ENCODE measurements at regions of chr2 and their contacts with region 1.

Region 1: DNA sequence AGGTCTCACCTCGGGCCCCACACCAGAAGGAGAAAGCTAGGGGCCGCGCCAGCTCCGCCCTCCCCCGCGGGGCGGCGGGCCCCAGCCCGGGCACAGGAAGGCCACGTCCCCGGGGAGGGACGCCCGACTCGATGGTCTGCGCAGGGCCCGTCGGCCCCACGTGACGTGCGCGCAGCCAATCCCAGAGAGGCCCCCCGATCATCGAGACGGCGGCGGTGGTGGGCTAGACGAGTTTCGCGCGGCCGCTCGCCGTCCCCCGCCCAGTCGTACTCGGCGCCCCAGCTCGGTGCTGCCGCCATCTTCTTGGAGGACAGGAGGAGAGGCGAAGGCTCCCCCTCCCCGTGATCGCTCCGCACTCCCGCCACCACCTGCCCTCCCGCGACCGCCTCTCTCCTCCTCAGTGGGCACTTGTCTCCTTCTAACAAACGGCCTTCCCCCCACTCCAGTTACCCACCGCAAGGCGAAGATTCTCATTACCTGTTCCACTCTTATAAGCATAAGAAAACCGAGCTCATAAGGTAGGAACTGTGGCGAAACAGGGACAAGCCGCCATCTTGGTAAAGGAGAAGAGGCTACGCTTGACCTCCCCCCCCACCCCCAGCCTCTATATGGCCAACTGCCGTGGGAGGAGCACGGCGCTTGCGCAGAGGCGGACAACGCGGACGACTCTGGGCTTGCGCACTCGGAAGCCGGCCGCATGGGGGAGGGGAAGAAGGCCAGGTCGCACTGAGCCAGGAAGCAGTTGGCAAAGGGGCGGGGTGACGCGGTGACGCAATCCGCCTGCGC is at the start of gene HDLBP:
- DNase-seq: peak; percentile 100
- H3K4me3 ChIP-seq: peak within 1 kb of the TSS; percentile 87
- H3K4me3 Mint-ChIP-seq: peak within 1 kb of the TSS; percentile 94 to 100 (median 98)
- H3K27ac ChIP-seq: peak within 1 kb of the TSS; percentile 96
- H3K27ac Mint-ChIP-seq: peak within 1 kb of the TSS; percentile 98 to 100 (median 99)
- H3K4me1 ChIP-seq: peaks cover 82% of the 10 kb centered on the region
- H3K4me1 Mint-ChIP-seq: peaks cover 54 to 92% (median 70%) of the 10 kb centered on the region in 4 donors
- H3K27me3 ChIP-seq: no peaks in the 10 kb centered on the region
- H3K27me3 Mint-ChIP-seq: peaks cover 0 to 1% of the 10 kb centered on the region in 2 donors
- total RNA-seq, gene HDLBP: 166 to 183 TPM

Region 2: DNA sequence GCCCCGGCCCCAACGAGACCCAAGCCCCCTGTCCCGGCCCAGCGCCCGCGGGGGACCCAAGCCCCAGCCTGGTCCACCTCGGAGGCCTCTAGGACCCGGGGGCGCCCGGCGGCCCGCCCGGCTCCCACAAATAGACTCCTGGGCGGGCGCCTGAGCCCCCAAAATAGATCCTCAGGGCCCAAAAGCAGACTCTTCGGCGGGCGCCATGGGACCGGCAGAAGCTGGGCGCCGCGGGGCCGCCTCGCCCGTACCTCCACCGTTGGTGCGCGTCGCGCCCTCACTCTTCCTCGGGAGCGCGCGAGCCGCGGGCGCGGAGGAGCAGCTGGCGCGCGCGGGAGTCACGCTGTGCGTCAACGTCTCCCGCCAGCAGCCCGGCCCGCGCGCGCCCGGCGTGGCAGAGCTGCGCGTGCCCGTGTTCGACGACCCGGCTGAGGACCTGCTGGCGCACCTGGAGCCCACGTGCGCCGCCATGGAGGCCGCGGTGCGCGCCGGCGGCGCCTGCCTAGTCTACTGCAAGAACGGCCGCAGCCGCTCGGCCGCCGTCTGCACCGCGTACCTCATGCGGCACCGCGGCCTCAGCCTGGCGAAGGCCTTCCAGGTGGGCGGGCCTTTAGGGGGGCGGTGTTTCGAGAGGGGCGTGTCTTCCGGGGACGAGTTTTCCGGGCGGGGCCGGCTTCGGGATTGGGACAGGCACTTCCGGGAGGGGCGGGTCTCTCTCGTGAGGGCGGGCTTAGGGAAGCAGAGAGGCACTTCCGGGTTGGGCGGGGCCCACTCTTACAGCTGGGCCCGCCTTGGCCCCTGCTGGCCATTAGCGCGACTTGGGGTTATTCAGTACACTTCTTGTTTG is 754.6 kb before region 1 on chr2:
- CTCF ChIA-PET with region 1: no interaction called
- POLR2A ChIA-PET with region 1: interaction called, 15 read pairs
- intact Hi-C with region 1: loop called (anchors 10 kb)
- DNase-seq: peak; percentile 99 to 100 (median 99)
- H3K4me3 ChIP-seq: peak overlapping the region; percentile 54 to 90
- H3K4me3 Mint-ChIP-seq: peak overlapping the region; percentile 84 to 91 (median 88)
- H3K27ac ChIP-seq: peak overlapping the region; percentile 86
- H3K27ac Mint-ChIP-seq: peak overlapping the region; percentile 86 to 99 (median 94)
- H3K4me1 ChIP-seq: peaks cover 85% of the 10 kb centered on the region
- H3K4me1 Mint-ChIP-seq: peaks cover 47 to 84% (median 67%) of the 10 kb centered on the region in 4 donors
- H3K27me3 ChIP-seq: no peaks in the 10 kb centered on the region
- H3K27me3 Mint-ChIP-seq: no peaks in the 10 kb centered on the region

Region 3: DNA sequence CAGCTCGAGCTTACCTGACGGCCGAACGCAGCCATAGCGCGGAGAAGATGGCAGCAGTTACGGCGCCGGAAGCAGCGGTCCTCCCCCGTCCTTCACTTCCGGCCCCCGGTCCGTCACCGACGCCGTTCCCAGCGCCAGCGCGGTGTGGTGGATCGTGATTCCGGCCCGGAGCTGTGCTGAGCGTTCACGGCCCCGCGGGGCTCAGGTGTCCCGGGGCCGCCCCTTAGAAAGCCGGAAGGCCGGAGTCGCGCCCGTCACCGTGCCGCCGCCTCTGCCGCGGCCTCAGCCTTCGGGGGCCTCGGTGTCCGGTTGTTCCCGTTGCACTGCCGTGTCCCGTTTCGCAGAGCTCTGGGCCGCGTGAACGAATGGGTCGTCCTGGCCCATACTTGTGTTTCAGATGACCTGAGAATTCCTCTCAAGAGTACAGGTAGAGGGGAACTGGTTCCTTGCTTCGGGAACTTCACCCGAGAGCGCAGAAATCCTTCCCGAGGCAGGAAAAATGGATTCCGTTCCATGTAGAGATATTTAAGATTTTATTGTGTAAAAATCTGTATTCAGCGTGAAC is 213.0 kb before region 1 on chr2 and contains the start of gene MTERF4:
- CTCF ChIA-PET with region 1: interaction called, 5 read pairs
- POLR2A ChIA-PET with region 1: interaction called, 16 read pairs
- intact Hi-C with region 1: loop called (anchors 2 kb)
- DNase-seq: peak; percentile 85 to 88 (median 86)
- H3K4me3 ChIP-seq: peak within 1 kb of the TSS; percentile 92 to 94
- H3K4me3 Mint-ChIP-seq: peak within 1 kb of the TSS; percentile 94 to 98 (median 96)
- H3K27ac ChIP-seq: peak within 1 kb of the TSS; percentile 92
- H3K27ac Mint-ChIP-seq: peak within 1 kb of the TSS; percentile 97 to 99 (median 98)
- H3K4me1 ChIP-seq: peaks cover 88% of the 10 kb centered on the region
- H3K4me1 Mint-ChIP-seq: peaks cover 32 to 88% (median 62%) of the 10 kb centered on the region in 4 donors
- H3K27me3 ChIP-seq: no peaks in the 10 kb centered on the region
- H3K27me3 Mint-ChIP-seq: no peaks in the 10 kb centered on the region
- total RNA-seq, gene MTERF4: 204 to 227 TPM

Region 4: DNA sequence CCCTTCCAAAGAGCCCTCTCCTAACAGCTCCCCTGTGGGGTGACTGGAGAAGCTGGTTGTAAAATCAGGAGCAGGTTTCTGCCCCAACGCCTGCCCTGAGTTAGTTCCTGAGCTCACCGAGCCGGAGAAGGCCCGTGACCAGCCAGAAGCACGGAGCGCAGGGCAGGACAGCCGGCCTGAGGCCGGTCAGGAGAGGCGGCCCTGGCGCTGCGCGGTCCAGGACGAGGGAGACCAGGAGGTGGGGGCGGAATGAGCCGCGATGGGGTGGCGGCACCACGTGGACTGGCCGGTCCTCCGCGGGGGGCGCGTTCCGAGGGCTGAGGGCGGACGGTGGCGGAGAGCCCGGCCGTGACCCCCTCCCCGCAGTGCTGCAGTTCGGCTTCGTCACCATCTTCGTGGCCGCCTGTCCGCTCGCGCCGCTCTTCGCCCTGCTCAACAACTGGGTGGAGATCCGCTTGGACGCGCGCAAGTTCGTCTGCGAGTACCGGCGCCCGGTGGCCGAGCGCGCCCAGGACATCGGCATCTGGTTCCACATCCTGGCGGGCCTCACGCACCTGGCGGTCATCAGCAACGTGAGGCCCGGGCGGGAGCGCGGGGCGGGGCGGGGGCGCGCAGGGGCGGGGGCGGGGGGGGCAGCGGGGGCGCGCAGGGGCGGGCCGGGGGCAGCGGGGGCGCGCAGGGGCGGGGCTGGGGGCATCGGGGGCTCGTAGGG is 97.8 kb before region 1 on chr2:
- CTCF ChIA-PET with region 1: no interaction called
- POLR2A ChIA-PET with region 1: interaction called, 3 read pairs
- intact Hi-C with region 1: loop called (anchors 5 kb)
- DNase-seq: peak in 4 of 5 donors; percentile 25 to 40 (median 36)
- H3K4me3 ChIP-seq: peak overlapping the region in 1 of 2 donors; percentile 32
- H3K4me3 Mint-ChIP-seq: peak overlapping the region; percentile 66 to 87 (median 78)
- H3K27ac ChIP-seq: peak overlapping the region; percentile 35
- H3K27ac Mint-ChIP-seq: peak overlapping the region in 6 of 7 donors; percentile 35 to 75 (median 62)
- H3K4me1 ChIP-seq: peaks cover 10% of the 10 kb centered on the region
- H3K4me1 Mint-ChIP-seq: peaks cover 10 to 17% (median 10%) of the 10 kb centered on the region in 4 donors
- H3K27me3 ChIP-seq: no peaks in the 10 kb centered on the region
- H3K27me3 Mint-ChIP-seq: no peaks in the 10 kb centered on the region

Region 5: DNA sequence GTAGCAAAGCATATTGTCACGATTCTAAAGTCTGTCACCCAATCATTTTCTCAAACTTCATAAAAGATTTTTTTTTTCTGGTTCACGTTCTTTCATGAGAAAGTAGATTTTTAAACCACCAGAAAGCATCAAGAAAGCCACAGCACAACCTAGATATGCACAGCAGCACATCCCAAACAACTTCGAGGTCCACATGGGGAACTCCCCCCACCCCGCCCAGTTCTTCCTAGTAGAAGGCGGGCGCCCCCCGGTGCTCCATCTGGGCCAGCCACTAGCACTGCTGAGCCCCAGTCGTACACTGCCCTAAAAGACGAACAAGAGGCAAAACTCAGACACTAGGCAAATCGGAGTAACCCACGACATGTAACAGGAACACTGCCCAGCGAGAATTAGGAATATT is 15.3 kb before region 1 on chr2:
- CTCF ChIA-PET with region 1: interaction called, 14 read pairs
- POLR2A ChIA-PET with region 1: interaction called, 46 read pairs
- intact Hi-C with region 1: loop called (anchors 2 kb)
- DNase-seq: peak; percentile 23 to 59 (median 50)
- H3K4me3 ChIP-seq: no peak overlapping the region
- H3K4me3 Mint-ChIP-seq: peak overlapping the region in 7 of 8 donors; percentile 25 to 65 (median 58)
- H3K27ac ChIP-seq: no peak overlapping the region
- H3K27ac Mint-ChIP-seq: peak overlapping the region in 6 of 7 donors; percentile 29 to 89 (median 62)
- H3K4me1 ChIP-seq: peaks cover 56% of the 10 kb centered on the region
- H3K4me1 Mint-ChIP-seq: peaks cover 39 to 77% (median 59%) of the 10 kb centered on the region in 4 donors
- H3K27me3 ChIP-seq: no peaks in the 10 kb centered on the region
- H3K27me3 Mint-ChIP-seq: no peaks in the 10 kb centered on the region

Region 6: DNA sequence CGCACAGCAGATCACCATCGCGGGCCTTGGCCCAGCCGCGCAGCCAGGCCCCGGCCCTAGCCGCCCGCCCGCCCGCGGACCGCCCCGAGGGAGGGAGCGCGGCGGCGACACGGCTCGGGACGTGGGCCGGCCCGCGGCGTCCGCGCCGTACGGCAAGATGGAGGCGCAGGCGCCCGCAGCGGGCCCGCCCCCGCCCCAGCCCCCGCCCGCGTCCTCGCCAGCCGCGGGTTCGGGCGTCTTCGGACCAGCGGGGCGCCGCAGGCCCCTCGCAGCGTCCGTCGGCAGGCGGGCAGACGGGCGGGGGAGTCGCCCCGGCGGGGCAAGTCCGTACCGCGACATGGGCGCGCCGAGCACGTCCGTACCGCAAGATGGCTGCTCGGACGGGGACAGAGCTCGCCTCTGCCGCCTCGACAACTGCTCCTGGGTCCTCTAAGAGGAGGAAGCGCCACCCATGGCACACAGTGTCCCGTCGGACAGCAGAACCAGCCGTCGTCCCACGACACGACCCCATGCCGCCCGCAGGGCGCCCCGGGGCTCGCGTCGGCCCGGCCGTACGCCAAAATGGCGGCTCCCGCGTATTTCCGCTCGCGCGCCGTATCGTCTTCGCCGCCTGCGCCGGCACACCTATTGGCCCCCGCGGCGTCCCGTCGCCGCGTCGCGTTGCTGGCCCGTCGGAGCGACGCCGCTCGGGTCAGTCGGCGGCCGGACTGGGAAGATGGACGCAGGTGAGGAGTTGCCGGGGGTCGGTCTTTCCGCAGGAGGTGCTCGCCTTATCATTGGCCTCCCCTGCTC is 321.9 kb after region 1 on chr2 and contains the starts of genes ATG4B and THAP4:
- CTCF ChIA-PET with region 1: no interaction called
- POLR2A ChIA-PET with region 1: interaction called, 6 read pairs
- intact Hi-C with region 1: loop called (anchors 10 kb)
- DNase-seq: peak; percentile 73 to 89 (median 78)
- H3K4me3 ChIP-seq: peak within 1 kb of the TSS; percentile 65 to 90
- H3K4me3 Mint-ChIP-seq: peak within 1 kb of the TSS; percentile 86 to 98 (median 94)
- H3K27ac ChIP-seq: peak within 1 kb of the TSS; percentile 88
- H3K27ac Mint-ChIP-seq: peak within 1 kb of the TSS; percentile 82 to 98 (median 93)
- H3K4me1 ChIP-seq: peaks cover 35% of the 10 kb centered on the region
- H3K4me1 Mint-ChIP-seq: peaks cover 36 to 71% (median 48%) of the 10 kb centered on the region in 4 donors
- H3K27me3 ChIP-seq: no peaks in the 10 kb centered on the region
- H3K27me3 Mint-ChIP-seq: no peaks in the 10 kb centered on the region
- total RNA-seq, gene ATG4B: 87.7 to 96.9 TPM
- total RNA-seq, gene THAP4: 27.8 to 28.2 TPM

Measured in CD4-positive, alpha-beta memory T cell (primary cell).